ENCODE measurements at regions of chr9 and their contacts with region 1.

Region 1: GRCh38 chr9:117354244-117354847 is 60.5 kb downstream of the ASTN2 start:
- DNase-seq: no peak
- H3K4me3 ChIP-seq: no peak overlapping the region
- H3K27ac ChIP-seq: no peak overlapping the region
- H3K4me1 ChIP-seq: no peaks in the 10 kb centered on the region
- H3K27me3 ChIP-seq: no peaks in the 10 kb centered on the region
- CTCF ChIP-seq: no peak
- EP300 ChIP-seq: no peak
- POLR2A ChIP-seq: no peak

Region 2: DNA sequence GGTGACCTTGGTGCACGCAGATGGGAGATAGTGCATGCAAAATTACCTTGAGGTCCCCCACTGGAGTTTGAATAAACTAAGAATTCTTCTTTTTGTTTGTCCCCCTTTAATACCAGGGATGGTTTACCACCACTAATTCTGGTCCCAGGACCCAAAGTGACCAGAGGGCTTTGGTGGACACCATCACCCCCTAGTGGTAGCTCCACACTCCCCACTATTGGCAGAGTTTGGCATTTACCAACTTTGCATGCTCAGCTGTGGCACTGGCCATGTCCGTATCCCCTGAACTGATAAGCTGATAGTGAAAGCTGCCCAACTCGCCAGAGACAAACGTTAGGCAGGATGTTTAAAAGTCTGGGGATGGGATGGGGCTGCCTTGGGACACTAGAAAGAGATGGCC is 57.2 kb after region 1 on chr9:
- intact Hi-C with region 1: loop called in 1 of 4 experiments (anchors 10 kb)
- DNase-seq: no peak
- H3K4me3 ChIP-seq: no peak overlapping the region
- H3K27ac ChIP-seq: no peak overlapping the region
- H3K4me1 ChIP-seq: peaks cover 1% of the 10 kb centered on the region
- H3K27me3 ChIP-seq: no peaks in the 10 kb centered on the region
- CTCF ChIP-seq: no peak
- EP300 ChIP-seq: no peak
- POLR2A ChIP-seq: no peak

Region 3: GRCh38 chr9:117744856-117745389 is 390.6 kb after region 1 on chr9:
- intact Hi-C with region 1: no loop called
- DNase-seq: no peak
- H3K4me3 ChIP-seq: no peak overlapping the region
- H3K27ac ChIP-seq: no peak overlapping the region
- H3K4me1 ChIP-seq: no peaks in the 10 kb centered on the region
- H3K27me3 ChIP-seq: no peaks in the 10 kb centered on the region
- CTCF ChIP-seq: no peak
- EP300 ChIP-seq: no peak
- POLR2A ChIP-seq: no peak

Measured in ovary (tissue), 10 donors.